ENCODE measurements at regions of chr5 and their contacts with region 1.

Region 1: GRCh38 chr5:27548484-27548883 is 510.1 kb upstream of the CDH9 start:
- DNase-seq: no peak
- ATAC-seq: no peak
- H3K4me3 ChIP-seq: no peak overlapping the region
- H3K27ac ChIP-seq: no peak overlapping the region
- H3K4me1 ChIP-seq: no peaks in the 10 kb centered on the region
- H3K27me3 ChIP-seq: no peaks in the 10 kb centered on the region
- CTCF ChIP-seq: no peak

Region 2: GRCh38 chr5:27561408-27561807 is 12.9 kb after region 1 on chr5:
- intact Hi-C with region 1: loop called in 1 of 2 experiments (anchors 2 kb)
- DNase-seq: no peak
- ATAC-seq: no peak
- H3K4me3 ChIP-seq: no peak overlapping the region
- H3K27ac ChIP-seq: no peak overlapping the region
- H3K4me1 ChIP-seq: no peaks in the 10 kb centered on the region
- H3K27me3 ChIP-seq: no peaks in the 10 kb centered on the region
- CTCF ChIP-seq: no peak

Measured in psoas muscle (tissue), 8 donors.